ENCODE measurements at regions of chr6 and their contacts with region 1.

Region 1: GRCh38 chr6:77457720-77458349 is 5.5 kb downstream of the HTR1B start:
- DNase-seq: peak; percentile 93
- H3K4me3 ChIP-seq: no peak overlapping the region
- H3K27ac ChIP-seq: peak overlapping the region; percentile 76; the same call in 1 of the 2 replicates
- H3K4me1 ChIP-seq: peaks cover 34% of the 10 kb centered on the region
- H3K27me3 ChIP-seq: peaks cover 10% of the 10 kb centered on the region

Region 2: DNA sequence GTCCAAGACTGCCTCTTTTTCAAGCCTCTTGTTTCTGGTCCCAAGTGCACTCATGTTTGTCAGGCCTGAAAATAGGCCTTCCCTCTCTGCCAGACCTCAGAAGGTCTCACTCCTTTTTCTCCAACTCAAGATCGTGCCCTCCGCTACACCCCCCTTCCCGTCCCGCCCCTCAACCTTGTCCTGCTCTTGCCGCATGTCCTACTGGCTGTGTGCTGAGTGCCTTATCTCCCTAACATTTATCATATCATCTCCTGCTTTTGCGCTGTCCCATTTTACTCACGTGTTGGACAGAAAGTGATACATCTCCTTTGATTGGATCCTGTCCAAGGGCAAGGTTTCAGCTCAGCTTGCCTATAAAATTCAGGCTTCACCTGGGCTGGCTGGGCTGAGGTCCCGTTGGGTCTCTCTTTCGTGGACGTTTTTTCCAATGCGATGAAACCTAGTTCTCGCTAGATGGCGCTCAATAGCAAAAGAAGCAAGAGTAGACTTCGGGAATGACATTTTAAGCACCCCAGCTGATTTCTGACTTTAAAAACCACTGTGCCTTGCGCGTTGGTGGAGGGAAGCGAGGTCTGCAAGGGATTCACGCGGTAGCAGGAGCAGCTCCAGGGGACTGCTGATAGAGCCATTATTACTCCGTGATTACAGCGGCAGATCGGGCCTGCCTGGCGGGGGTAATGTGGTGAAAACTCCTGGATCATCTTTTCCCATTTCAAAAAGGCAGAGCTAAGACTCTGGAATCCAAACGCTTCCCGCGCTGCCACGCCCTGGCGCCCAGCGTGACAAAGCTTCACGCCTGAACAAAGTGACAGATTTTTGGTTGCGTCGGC is 1523.0 kb before region 1 on chr6:
- in situ Hi-C with region 1: loop called (anchors 25 kb)
- DNase-seq: peak; percentile 84
- H3K4me3 ChIP-seq: peak overlapping the region; percentile 76
- H3K27ac ChIP-seq: no peak overlapping the region
- H3K4me1 ChIP-seq: no peaks in the 10 kb centered on the region
- H3K27me3 ChIP-seq: no peaks in the 10 kb centered on the region

Region 3: GRCh38 chr6:76697585-76697984 is 760.2 kb before region 1 on chr6:
- in situ Hi-C with region 1: loop called (anchors 10 kb)
- DNase-seq: peak; percentile 22
- H3K4me3 ChIP-seq: no peak overlapping the region
- H3K27ac ChIP-seq: no peak overlapping the region
- H3K4me1 ChIP-seq: no peaks in the 10 kb centered on the region
- H3K27me3 ChIP-seq: no peaks in the 10 kb centered on the region

Region 4: GRCh38 chr6:77015350-77015749 is 442.5 kb before region 1 on chr6:
- in situ Hi-C with region 1: no loop called
- DNase-seq: peak; percentile 61
- H3K4me3 ChIP-seq: no peak overlapping the region
- H3K27ac ChIP-seq: no peak overlapping the region
- H3K4me1 ChIP-seq: no peaks in the 10 kb centered on the region
- H3K27me3 ChIP-seq: no peaks in the 10 kb centered on the region

Region 5: DNA sequence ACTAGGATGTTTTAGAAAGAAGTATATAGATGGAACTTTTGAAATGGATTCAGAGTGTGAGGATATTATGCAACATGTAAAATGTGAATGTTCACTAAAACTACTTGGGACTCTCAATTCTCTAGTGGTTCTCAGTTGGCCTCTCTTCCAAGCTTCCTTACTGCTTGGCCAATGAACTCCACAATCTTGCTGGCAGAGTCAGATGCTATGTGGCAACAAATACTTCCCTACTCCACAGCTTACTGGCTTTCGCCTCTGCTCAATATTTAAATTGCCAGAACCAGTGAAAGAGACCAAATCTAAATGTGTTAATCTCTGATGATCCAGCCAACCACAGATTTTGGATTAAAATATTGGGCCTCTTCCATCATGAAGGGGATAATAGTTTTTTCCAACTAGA is 133.0 kb before region 1 on chr6:
- in situ Hi-C with region 1: no loop called
- DNase-seq: peak; percentile 4
- H3K4me3 ChIP-seq: no peak overlapping the region
- H3K27ac ChIP-seq: no peak overlapping the region
- H3K4me1 ChIP-seq: no peaks in the 10 kb centered on the region
- H3K27me3 ChIP-seq: no peaks in the 10 kb centered on the region

Measured in GM23248 (cell line).